ENCODE measurements at regions of chr14 and their contacts with region 1.

Region 1: DNA sequence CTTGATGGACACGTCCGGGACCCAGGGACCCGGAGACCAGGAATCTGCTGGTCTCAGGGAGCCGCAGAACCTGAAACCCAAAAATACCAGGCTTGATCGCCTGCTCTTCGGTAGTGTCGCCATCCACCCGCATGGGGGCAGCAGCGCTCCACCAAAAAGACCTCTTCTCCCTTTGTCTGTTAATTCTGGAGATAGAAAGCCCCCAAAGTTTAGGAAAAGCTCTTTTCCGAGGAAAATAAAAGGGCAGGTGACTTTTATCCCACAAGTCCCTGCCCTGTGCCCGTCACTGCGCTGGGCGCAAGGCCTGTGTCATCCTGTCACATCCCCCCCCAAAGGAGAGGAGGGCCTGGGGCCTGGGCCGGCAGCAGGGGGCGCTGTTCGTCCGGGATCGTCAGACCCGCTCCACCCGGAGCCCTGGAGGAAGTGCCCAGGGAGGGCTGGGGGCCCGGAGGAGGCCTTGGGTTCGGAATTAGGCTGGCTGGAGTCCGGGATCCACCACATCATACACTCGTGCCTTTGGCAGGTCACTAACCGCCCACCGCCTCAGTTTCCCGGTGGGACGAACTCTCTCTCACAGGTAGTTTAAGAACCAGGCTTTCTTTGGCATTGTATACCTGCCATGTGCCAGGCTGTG is 31.9 kb downstream of the DAD1 start:
- DNase-seq: peak; percentile 84 to 97 (median 93)
- ATAC-seq: peak; percentile 48
- H3K4me3 ChIP-seq: peak overlapping the region; percentile 65
- H3K4me3 Mint-ChIP-seq: peak overlapping the region; percentile 67 to 95 (median 88)
- H3K27ac ChIP-seq: peak overlapping the region; percentile 96
- H3K27ac Mint-ChIP-seq: peak overlapping the region; percentile 94 to 99 (median 99)
- H3K4me1 ChIP-seq: peaks cover 87 to 90% of the 10 kb centered on the region in 2 donors
- H3K4me1 Mint-ChIP-seq: peaks cover 62 to 95% (median 92%) of the 10 kb centered on the region in 7 donors
- H3K27me3 ChIP-seq: no peaks in the 10 kb centered on the region
- H3K27me3 Mint-ChIP-seq: peaks cover 0 to 4% (median 0%) of the 10 kb centered on the region in 5 donors

Region 2: DNA sequence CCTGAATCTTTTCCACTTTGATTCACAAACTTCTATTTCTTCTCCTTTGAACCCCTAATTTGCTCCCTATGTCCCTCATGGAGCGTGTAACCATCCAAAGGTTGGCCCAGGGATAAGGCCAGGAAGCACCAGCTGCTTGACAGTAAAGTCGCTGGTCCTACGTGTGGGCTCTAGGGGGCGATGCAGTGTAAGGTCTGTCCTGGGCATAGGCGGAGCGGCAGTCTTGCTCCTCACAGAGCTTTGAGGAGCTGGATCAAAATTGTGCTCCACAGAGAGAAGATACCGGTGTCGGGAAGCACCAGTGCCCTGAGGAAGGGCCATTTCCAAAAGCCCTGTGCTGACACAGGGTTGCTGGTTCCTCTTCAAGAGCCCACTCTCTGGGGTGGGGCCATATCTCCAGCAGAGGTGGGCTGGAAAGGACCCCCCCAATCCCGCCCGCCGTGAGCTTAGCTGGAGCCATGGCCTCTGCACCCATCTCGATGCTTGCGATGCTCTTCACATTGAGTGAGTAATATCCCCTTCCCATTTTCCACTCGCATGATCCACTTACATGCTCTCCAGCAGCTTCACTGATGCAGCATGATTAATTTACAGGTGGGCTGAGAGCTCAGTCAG is 833.6 kb before region 1 on chr14:
- CTCF ChIA-PET with region 1: interaction called, 3 read pairs
- POLR2A ChIA-PET with region 1: interaction called, 7 read pairs
- intact Hi-C with region 1: loop called in 1 of 2 experiments (anchors 2 kb)
- DNase-seq: peak in 5 of 9 donors; percentile 33 to 37 (median 36)
- ATAC-seq: peak; percentile 73
- H3K4me3 ChIP-seq: no peak overlapping the region
- H3K4me3 Mint-ChIP-seq: peak overlapping the region; percentile 33 to 94 (median 76)
- H3K27ac ChIP-seq: peak overlapping the region; percentile 33
- H3K27ac Mint-ChIP-seq: peak overlapping the region in 8 of 9 donors; percentile 15 to 80 (median 72)
- H3K4me1 ChIP-seq: no peaks in the 10 kb centered on the region
- H3K4me1 Mint-ChIP-seq: peaks cover 0 to 3% (median 0%) of the 10 kb centered on the region in 7 donors
- H3K27me3 ChIP-seq: no peaks in the 10 kb centered on the region
- H3K27me3 Mint-ChIP-seq: peaks cover 34 to 38% (median 36%) of the 10 kb centered on the region in 5 donors

Region 3: DNA sequence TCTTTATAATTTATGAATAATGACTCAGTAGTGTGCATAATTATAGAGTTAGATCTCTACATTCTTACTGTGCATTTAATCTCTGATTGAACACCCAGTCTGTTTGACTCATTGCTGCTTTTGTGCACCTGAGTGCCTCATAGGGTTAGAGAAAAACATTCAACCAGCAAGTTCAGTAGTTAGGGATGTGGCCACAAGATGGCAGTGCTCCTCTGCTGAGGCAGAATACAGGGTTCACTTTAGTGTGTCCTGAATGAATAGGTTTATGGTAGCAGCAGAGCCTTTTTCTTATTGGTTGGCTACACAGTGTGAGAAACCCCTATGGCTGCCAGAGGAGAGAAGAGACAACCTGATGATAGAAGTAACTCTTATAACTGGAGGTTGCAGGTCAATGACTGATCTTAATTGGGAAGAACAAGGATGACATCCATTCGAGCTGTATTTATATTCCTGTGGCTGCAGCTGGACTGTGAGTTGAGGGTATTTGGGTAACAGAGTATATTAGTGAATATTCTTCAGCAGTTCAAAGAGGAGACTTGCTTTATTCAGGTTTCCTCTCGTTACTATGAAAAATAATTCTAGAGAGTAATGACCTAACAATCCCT is 688.6 kb before region 1 on chr14:
- CTCF ChIA-PET with region 1: interaction called, 6 read pairs
- POLR2A ChIA-PET with region 1: interaction called, 9 read pairs
- intact Hi-C with region 1: loop called (anchors 1 to 5 kb)
- DNase-seq: peak; percentile 33 to 79 (median 70)
- ATAC-seq: peak; percentile 97
- H3K4me3 ChIP-seq: peak overlapping the region; percentile 16
- H3K4me3 Mint-ChIP-seq: peak overlapping the region; percentile 18 to 85 (median 74)
- H3K27ac ChIP-seq: peak overlapping the region; percentile 25
- H3K27ac Mint-ChIP-seq: peak overlapping the region; percentile 8 to 88 (median 59)
- H3K4me1 ChIP-seq: peaks cover 4 to 8% of the 10 kb centered on the region in 2 donors
- H3K4me1 Mint-ChIP-seq: peaks cover 3 to 54% (median 25%) of the 10 kb centered on the region in 7 donors
- H3K27me3 ChIP-seq: peaks cover 0 to 3% of the 10 kb centered on the region in 2 donors
- H3K27me3 Mint-ChIP-seq: peaks cover 0 to 6% (median 0%) of the 10 kb centered on the region in 5 donors

Region 4: GRCh38 chr14:22047115-22047514 is 510.0 kb before region 1 on chr14:
- CTCF ChIA-PET with region 1: no interaction called
- POLR2A ChIA-PET with region 1: interaction called, 4 read pairs
- intact Hi-C with region 1: loop called in 1 of 2 experiments (anchors 2 kb)
- DNase-seq: peak in 7 of 9 donors; percentile 44 to 71 (median 65)
- ATAC-seq: peak; percentile 91
- H3K4me3 ChIP-seq: no peak overlapping the region
- H3K4me3 Mint-ChIP-seq: peak overlapping the region; percentile 26 to 79 (median 70)
- H3K27ac ChIP-seq: peak overlapping the region; percentile 57
- H3K27ac Mint-ChIP-seq: peak overlapping the region; percentile 76 to 93 (median 90)
- H3K4me1 ChIP-seq: no peaks in the 10 kb centered on the region
- H3K4me1 Mint-ChIP-seq: peaks cover 7 to 61% (median 44%) of the 10 kb centered on the region in 7 donors
- H3K27me3 ChIP-seq: no peaks in the 10 kb centered on the region
- H3K27me3 Mint-ChIP-seq: peaks cover 0 to 1% (median 0%) of the 10 kb centered on the region in 5 donors

Region 5: GRCh38 chr14:22314181-22314820 is 242.8 kb before region 1 on chr14:
- CTCF ChIA-PET with region 1: no interaction called
- POLR2A ChIA-PET with region 1: interaction called, 3 read pairs
- intact Hi-C with region 1: loop called (anchors 2 to 10 kb)
- DNase-seq: peak in 3 of 9 donors; percentile 4 to 32 (median 19)
- ATAC-seq: peak; percentile 76
- H3K4me3 ChIP-seq: no peak overlapping the region
- H3K4me3 Mint-ChIP-seq: peak overlapping the region in 7 of 10 donors; percentile 42 to 83 (median 60)
- H3K27ac ChIP-seq: no peak overlapping the region
- H3K27ac Mint-ChIP-seq: peak overlapping the region in 5 of 9 donors; percentile 59 to 80 (median 73)
- H3K4me1 ChIP-seq: no peaks in the 10 kb centered on the region
- H3K4me1 Mint-ChIP-seq: peaks cover 0 to 4% (median 0%) of the 10 kb centered on the region in 7 donors
- H3K27me3 ChIP-seq: no peaks in the 10 kb centered on the region
- H3K27me3 Mint-ChIP-seq: no peaks in the 10 kb centered on the region

Region 6: GRCh38 chr14:22653012-22653621 is 96.0 kb after region 1 on chr14:
- CTCF ChIA-PET with region 1: interaction called, 3 read pairs
- POLR2A ChIA-PET with region 1: interaction called, 4 read pairs
- intact Hi-C with region 1: loop called (anchors 1 kb)
- DNase-seq: peak; percentile 17 to 54 (median 42)
- ATAC-seq: peak; percentile 87
- H3K4me3 ChIP-seq: no peak overlapping the region
- H3K4me3 Mint-ChIP-seq: no peak overlapping the region
- H3K27ac ChIP-seq: no peak overlapping the region
- H3K27ac Mint-ChIP-seq: no peak overlapping the region
- H3K4me1 ChIP-seq: no peaks in the 10 kb centered on the region
- H3K4me1 Mint-ChIP-seq: peaks cover 0 to 3% (median 0%) of the 10 kb centered on the region in 7 donors
- H3K27me3 ChIP-seq: no peaks in the 10 kb centered on the region
- H3K27me3 Mint-ChIP-seq: no peaks in the 10 kb centered on the region